Motor neuron (in vitro differentiated cells): ENCODE measurements at regions of chr9 and their contacts with region 1.

Region 1: GRCh38 chr9:98607787-98608186 is 100.9 kb downstream of the GABBR2 start:
- ATAC-seq: peak in 1 of 8 experiments; percentile 43
- H3K4me3 ChIP-seq: no peak overlapping the region
- H3K27ac ChIP-seq: no peak overlapping the region
- H3K4me1 ChIP-seq: no peaks in the 10 kb centered on the region

Region 2: GRCh38 chr9:98707166-98708102 is 99.6 kb after region 1 on chr9:
- in situ Hi-C with region 1: loop called in 1 of 9 experiments (anchors 25 kb)
- ATAC-seq: peak; percentile 82 to 93 (median 86)
- H3K4me3 ChIP-seq: peak overlapping the region; percentile 50 to 80 (median 58)
- H3K27ac ChIP-seq: no peak overlapping the region
- H3K4me1 ChIP-seq: peaks cover 0 to 6% of the 10 kb centered on the region in 2 donors